ENCODE measurements at regions of chr5 and their contacts with region 1.

Region 1: GRCh38 chr5:43484106-43484849 is 613 bp upstream of the TMEM267 start:
- DNase-seq: peak; percentile 91
- H3K4me3 ChIP-seq: peak overlapping the region; percentile 82 to 93 (median 87)
- H3K27ac ChIP-seq: peak overlapping the region; percentile 95 to 97 (median 95)
- H3K4me1 ChIP-seq: peaks cover 0 to 23% (median 19%) of the 10 kb centered on the region in 4 donors
- H3K27me3 ChIP-seq: no peaks in the 10 kb centered on the region
- CTCF ChIP-seq: peak; percentile 24 to 83 (median 78)
- EP300 ChIP-seq: no peak
- POLR2A ChIP-seq: peak in 1 of 2 donors; percentile 9

Region 2: GRCh38 chr5:43066799-43067741 is 417.2 kb before region 1 on chr5:
- intact Hi-C with region 1: loop called (anchors 5 kb)
- DNase-seq: peak; percentile 93
- H3K4me3 ChIP-seq: peak overlapping the region; percentile 65 to 91 (median 80)
- H3K27ac ChIP-seq: peak overlapping the region; percentile 94 to 100 (median 98)
- H3K4me1 ChIP-seq: peaks cover 0 to 38% (median 25%) of the 10 kb centered on the region in 4 donors
- H3K27me3 ChIP-seq: no peaks in the 10 kb centered on the region
- CTCF ChIP-seq: no peak
- EP300 ChIP-seq: no peak
- POLR2A ChIP-seq: peak; percentile 78 to 83

Region 3: GRCh38 chr5:43313035-43313853 is 171.0 kb before region 1 on chr5 and contains the start of gene HMGCS1:
- intact Hi-C with region 1: loop called (anchors 2 kb)
- DNase-seq: peak; percentile 99
- H3K4me3 ChIP-seq: peak within 1 kb of the TSS; percentile 58 to 89 (median 75)
- H3K27ac ChIP-seq: peak within 1 kb of the TSS; percentile 87 to 94 (median 89)
- H3K4me1 ChIP-seq: peaks cover 0 to 28% (median 18%) of the 10 kb centered on the region in 4 donors
- H3K27me3 ChIP-seq: no peaks in the 10 kb centered on the region
- CTCF ChIP-seq: no peak
- EP300 ChIP-seq: no peak
- POLR2A ChIP-seq: peak; percentile 90 to 96
- total RNA-seq, gene HMGCS1: 13.0 to 20.7 (median 16.0) TPM

Region 4: DNA sequence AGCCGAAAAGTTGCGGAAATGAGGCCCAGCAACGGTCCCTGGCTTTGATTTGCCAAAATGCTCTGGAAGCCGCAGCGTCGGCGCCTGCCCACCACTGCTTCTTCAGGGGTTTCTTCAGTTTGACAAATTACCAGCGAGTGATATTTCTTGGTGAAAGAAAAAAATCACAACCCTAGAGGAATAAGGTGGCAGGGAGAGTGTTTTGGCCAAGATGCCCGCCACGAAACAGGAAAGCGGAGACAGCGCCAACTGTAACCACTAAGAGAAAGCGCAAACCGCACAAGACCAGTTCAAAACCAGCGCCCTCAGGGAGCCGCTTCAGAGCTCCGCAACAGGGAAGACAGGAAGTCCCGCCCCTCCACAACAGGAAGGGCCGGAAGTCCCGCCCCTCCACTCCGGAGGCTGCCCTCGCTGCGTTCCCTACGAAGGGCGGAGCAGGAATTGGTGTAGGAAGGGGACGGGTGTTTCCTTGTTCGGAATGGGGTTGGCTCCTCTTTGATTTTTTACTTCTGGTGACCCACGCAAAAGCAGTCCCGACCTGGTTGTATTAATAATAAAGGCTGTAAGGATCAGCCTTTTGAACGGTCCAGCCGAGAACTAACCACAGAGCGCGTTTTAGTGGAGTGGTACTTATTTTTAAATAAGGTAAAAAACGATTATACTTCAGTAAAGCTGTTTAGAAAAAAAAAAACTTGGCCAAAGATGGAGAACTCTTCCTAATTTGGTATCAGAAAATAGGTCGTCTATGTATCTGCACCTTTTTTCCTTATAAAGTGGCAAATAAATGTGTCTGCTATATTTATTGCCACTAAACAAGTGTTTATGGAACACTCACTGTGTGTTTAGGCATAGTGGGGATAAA is 30.8 kb after region 1 on chr5 and contains the start of gene C5orf34:
- intact Hi-C with region 1: loop called (anchors 2 kb)
- DNase-seq: peak; percentile 98
- H3K4me3 ChIP-seq: peak within 1 kb of the TSS; percentile 49 to 67 (median 62)
- H3K27ac ChIP-seq: peak within 1 kb of the TSS; percentile 84 to 91 (median 88)
- H3K4me1 ChIP-seq: peaks cover 0 to 24% (median 20%) of the 10 kb centered on the region in 4 donors
- H3K27me3 ChIP-seq: no peaks in the 10 kb centered on the region
- CTCF ChIP-seq: no peak
- EP300 ChIP-seq: no peak
- POLR2A ChIP-seq: peak; percentile 59 to 64
- total RNA-seq, gene C5orf34: 1.1 to 4.3 (median 1.8) TPM

Region 5: DNA sequence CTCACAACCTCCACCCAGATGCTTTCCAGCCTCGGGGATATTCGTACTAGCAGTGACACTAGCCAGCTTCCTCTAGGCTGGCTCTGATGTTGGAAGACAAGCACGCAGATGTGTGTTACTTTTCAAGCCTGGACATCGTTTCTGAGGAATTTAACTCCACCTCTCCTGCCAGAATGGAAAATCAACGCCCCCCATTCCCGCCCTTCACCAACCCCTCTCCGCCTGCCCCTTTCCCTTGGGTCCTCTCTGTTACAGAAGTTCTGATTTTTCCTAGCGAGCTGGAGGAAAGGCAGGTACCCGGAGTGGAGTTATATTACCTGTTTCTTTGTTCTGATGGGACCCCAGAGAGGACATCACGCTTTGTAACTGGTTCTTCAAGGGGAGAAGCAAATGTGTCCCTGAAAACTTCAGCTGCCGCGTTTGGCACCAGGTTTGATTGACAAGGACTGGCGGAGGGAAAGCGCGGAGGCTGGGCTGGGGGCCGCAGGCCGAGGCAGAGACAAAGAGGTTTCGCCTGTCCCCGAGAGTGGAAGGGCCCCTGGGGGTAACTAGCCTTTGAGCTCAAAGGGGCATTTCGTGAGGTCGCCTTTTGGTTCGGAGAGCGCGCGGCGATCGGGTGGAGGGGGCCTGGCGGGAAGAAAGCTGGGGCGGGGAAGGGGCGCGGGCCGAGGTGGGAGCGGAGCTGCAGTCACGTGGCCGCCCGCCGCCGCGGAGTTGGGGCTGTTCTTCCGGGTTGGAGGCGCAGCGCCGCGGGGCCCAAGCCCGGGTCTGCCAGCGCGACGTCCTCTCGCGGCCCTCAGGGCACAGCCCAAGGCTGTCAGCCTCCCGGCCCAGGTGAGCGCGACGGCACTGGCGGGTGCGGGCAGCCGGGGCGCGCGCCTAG is 118.4 kb after region 1 on chr5 and contains the start of gene NNT:
- intact Hi-C with region 1: loop called (anchors 10 kb)
- DNase-seq: peak; percentile 87
- H3K4me3 ChIP-seq: peak within 1 kb of the TSS; percentile 71 to 93 (median 84)
- H3K27ac ChIP-seq: peak within 1 kb of the TSS; percentile 89 to 96 (median 92)
- H3K4me1 ChIP-seq: peaks cover 0 to 35% (median 23%) of the 10 kb centered on the region in 4 donors
- H3K27me3 ChIP-seq: no peaks in the 10 kb centered on the region
- CTCF ChIP-seq: no peak
- EP300 ChIP-seq: no peak
- POLR2A ChIP-seq: no peak
- total RNA-seq, gene NNT: 48.5 to 80.3 (median 73.7) TPM

Measured in sigmoid colon (tissue), 7 donors.